Psoas muscle (tissue), 8 donors: ENCODE measurements at regions of chr11 and their contacts with region 1.

Region 1: GRCh38 chr11:110366291-110366690 is 63.5 kb upstream of the FDX1 start:
- DNase-seq: peak in 1 of 2 donors; percentile 53
- ATAC-seq: peak in 1 of 4 donors; percentile 38
- H3K4me3 ChIP-seq: no peak overlapping the region
- H3K27ac ChIP-seq: no peak overlapping the region
- H3K4me1 ChIP-seq: no peaks in the 10 kb centered on the region
- H3K27me3 ChIP-seq: no peaks in the 10 kb centered on the region
- CTCF ChIP-seq: no peak

Region 2: DNA sequence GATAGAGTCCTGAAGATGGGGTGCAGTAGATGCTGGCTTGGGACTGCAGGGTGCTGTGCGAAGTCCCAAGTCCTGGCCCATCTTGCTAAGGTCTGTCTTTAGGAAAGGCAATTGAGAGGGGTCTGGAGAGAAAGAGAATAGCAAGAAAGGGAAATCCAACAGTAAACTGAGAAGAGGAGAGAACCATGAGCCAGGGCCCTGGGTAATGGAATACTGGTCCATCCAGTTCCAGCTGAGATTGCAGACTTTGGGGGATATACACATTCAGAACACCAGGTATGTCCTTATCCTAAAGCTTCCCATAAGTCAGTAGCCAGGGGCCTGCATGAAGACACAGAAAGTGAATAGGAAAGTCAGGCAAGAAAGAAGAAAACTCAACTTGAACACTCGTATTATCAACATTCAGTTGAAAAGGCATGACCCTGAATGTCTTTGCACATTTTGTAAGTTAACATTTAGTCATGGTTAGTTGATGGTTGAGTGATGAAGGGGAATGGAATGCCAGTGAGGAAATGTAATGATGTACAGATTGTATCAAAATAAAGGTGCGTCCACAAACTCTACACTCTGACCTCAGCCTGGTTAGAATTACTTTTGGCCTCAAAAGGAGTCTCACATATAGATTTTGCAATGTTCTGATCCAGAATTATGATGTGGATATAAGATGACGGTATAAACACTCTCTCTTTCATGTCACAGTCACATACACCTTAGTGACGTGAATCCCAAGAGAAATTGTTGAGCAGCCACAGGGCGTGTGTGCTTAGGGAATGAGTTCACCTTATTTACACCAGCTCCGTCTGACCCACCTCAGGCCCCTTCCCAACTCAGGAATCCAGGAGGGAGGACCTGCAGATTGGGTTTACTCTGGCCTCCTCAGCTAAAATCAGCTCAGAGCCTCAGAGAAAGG is 170.2 kb before region 1 on chr11:
- intact Hi-C with region 1: loop called in 1 of 2 experiments (anchors 5 kb)
- DNase-seq: no peak
- ATAC-seq: no peak
- H3K4me3 ChIP-seq: no peak overlapping the region
- H3K27ac ChIP-seq: no peak overlapping the region
- H3K4me1 ChIP-seq: no peaks in the 10 kb centered on the region
- H3K27me3 ChIP-seq: no peaks in the 10 kb centered on the region
- CTCF ChIP-seq: no peak

Region 3: GRCh38 chr11:110311783-110312579 is 54.3 kb before region 1 on chr11:
- intact Hi-C with region 1: loop called in 1 of 2 experiments (anchors 5 kb)
- DNase-seq: no peak
- ATAC-seq: no peak
- H3K4me3 ChIP-seq: no peak overlapping the region
- H3K27ac ChIP-seq: no peak overlapping the region
- H3K4me1 ChIP-seq: no peaks in the 10 kb centered on the region
- H3K27me3 ChIP-seq: no peaks in the 10 kb centered on the region
- CTCF ChIP-seq: no peak

Region 4: GRCh38 chr11:110327508-110327907 is 38.8 kb before region 1 on chr11:
- intact Hi-C with region 1: no loop called
- DNase-seq: no peak
- ATAC-seq: no peak
- H3K4me3 ChIP-seq: no peak overlapping the region
- H3K27ac ChIP-seq: no peak overlapping the region
- H3K4me1 ChIP-seq: no peaks in the 10 kb centered on the region
- H3K27me3 ChIP-seq: peaks cover 0 to 2% (median 0%) of the 10 kb centered on the region in 3 donors
- CTCF ChIP-seq: no peak

Region 5: DNA sequence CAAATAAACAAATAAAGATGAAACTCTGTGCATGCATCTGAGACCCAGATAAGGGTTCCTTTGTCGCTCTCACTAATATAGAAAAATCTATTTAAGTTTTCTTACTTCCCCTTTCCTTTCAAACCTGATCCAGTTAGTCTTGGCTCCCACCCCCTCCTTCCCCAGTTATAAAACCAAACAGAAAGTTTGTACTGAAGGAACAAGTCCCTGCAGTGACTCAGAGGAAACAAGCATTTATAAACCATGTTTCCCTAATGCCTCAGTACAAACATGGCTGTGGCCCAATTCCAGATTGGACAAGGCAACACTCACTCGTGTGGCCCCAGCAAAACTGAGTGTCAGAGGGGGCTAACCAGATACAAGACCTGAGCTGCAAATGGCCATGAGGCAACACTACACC is 411.5 kb after region 1 on chr11:
- intact Hi-C with region 1: no loop called
- DNase-seq: no peak
- ATAC-seq: no peak
- H3K4me3 ChIP-seq: no peak overlapping the region
- H3K27ac ChIP-seq: no peak overlapping the region
- H3K4me1 ChIP-seq: no peaks in the 10 kb centered on the region
- H3K27me3 ChIP-seq: no peaks in the 10 kb centered on the region
- CTCF ChIP-seq: no peak